ENCODE measurements at regions of chr13 and their contacts with region 1.

Region 1: DNA sequence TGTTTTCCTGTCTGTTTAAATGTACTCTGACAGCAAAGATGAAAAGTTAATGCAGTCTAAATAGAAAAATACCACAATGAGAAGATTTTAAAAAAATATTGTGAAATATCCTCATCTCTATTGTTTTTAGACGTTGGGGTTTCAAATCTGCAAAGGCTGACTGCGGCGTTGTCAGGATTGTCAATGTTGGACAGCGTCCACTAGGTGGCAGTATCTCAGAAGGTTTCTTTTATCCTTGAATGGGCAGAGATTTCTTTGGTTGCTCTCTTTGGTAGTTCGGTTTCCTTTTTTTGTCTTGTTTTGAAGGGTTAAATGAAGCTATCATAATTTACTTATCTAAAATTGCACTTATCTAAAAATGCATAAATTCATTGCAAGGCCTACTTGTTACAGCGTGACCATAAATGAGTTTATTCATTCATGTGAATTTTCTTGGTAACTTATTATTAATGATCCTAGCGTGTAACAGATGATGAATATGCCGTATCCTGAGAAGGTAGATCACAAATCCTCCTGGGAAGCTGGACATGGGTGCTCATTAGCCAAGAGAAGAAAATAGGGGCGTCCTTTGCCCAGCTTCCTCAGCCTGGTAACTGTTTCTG is 21.1 kb downstream of the TNFSF11 start:
- DNase-seq: peak in 8 of 9 experiments; percentile 22 to 62 (median 46)
- ATAC-seq: no peak
- H3K4me3 ChIP-seq: no peak overlapping the region
- H3K4me3 Mint-ChIP-seq: no peak overlapping the region
- H3K27ac ChIP-seq: no peak overlapping the region
- H3K27ac Mint-ChIP-seq: no peak overlapping the region
- H3K4me1 ChIP-seq: no peaks in the 10 kb centered on the region
- H3K4me1 Mint-ChIP-seq: no peaks in the 10 kb centered on the region
- H3K27me3 ChIP-seq: no peaks in the 10 kb centered on the region
- H3K27me3 Mint-ChIP-seq: peaks cover 10% of the 10 kb centered on the region
- CTCF ChIP-seq: peak; percentile 95

Region 2: GRCh38 chr13:42333613-42334328 is 261.3 kb before region 1 on chr13:
- CTCF ChIA-PET with region 1: interaction called, 6 read pairs
- POLR2A ChIA-PET with region 1: no interaction called
- intact Hi-C with region 1: loop called in 1 of 2 experiments (anchors 2 kb)
- DNase-seq: peak in 2 of 9 experiments; percentile 30 to 41
- ATAC-seq: no peak
- H3K4me3 ChIP-seq: no peak overlapping the region
- H3K4me3 Mint-ChIP-seq: no peak overlapping the region
- H3K27ac ChIP-seq: no peak overlapping the region
- H3K27ac Mint-ChIP-seq: peak overlapping the region; percentile 30
- H3K4me1 ChIP-seq: peaks cover 8% of the 10 kb centered on the region
- H3K4me1 Mint-ChIP-seq: peaks cover 29% of the 10 kb centered on the region
- H3K27me3 ChIP-seq: no peaks in the 10 kb centered on the region
- H3K27me3 Mint-ChIP-seq: no peaks in the 10 kb centered on the region
- CTCF ChIP-seq: peak; percentile 32

Region 3: GRCh38 chr13:42377640-42378382 is 217.3 kb before region 1 on chr13:
- CTCF ChIA-PET with region 1: no interaction called
- POLR2A ChIA-PET with region 1: no interaction called
- intact Hi-C with region 1: no loop called
- DNase-seq: peak in 2 of 9 experiments; percentile 73 to 85
- ATAC-seq: peak; percentile 68
- H3K4me3 ChIP-seq: no peak overlapping the region
- H3K4me3 Mint-ChIP-seq: no peak overlapping the region
- H3K27ac ChIP-seq: peak overlapping the region in 1 of 2 experiments; percentile 51
- H3K27ac Mint-ChIP-seq: peak overlapping the region; percentile 6
- H3K4me1 ChIP-seq: no peaks in the 10 kb centered on the region
- H3K4me1 Mint-ChIP-seq: peaks cover 28% of the 10 kb centered on the region
- H3K27me3 ChIP-seq: no peaks in the 10 kb centered on the region
- H3K27me3 Mint-ChIP-seq: no peaks in the 10 kb centered on the region
- CTCF ChIP-seq: no peak

Region 4: GRCh38 chr13:42581427-42581826 is 13.6 kb before region 1 on chr13:
- CTCF ChIA-PET with region 1: interaction called, 10 read pairs
- POLR2A ChIA-PET with region 1: no interaction called
- intact Hi-C with region 1: no loop called
- DNase-seq: no peak
- ATAC-seq: no peak
- H3K4me3 ChIP-seq: no peak overlapping the region
- H3K4me3 Mint-ChIP-seq: no peak overlapping the region
- H3K27ac ChIP-seq: no peak overlapping the region
- H3K27ac Mint-ChIP-seq: no peak overlapping the region
- H3K4me1 ChIP-seq: no peaks in the 10 kb centered on the region
- H3K4me1 Mint-ChIP-seq: no peaks in the 10 kb centered on the region
- H3K27me3 ChIP-seq: peaks cover 0 to 4% of the 10 kb centered on the region in 2 experiments
- H3K27me3 Mint-ChIP-seq: peaks cover 30% of the 10 kb centered on the region
- CTCF ChIP-seq: no peak

Region 5: DNA sequence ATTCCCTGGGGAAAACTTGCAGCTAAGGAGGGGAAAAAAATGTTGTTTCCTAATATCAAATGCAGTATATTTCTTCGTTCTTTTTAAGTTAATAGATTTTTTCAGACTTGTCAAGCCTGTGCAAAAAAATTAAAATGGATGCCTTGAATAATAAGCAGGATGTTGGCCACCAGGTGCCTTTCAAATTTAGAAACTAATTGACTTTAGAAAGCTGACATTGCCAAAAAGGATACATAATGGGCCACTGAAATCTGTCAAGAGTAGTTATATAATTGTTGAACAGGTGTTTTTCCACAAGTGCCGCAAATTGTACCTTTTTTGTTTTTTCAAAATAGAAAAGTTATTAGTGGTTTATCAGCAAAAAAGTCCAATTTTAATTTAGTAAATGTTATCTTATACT is 12.5 kb after region 1 on chr13:
- CTCF ChIA-PET with region 1: interaction called, 21 read pairs
- POLR2A ChIA-PET with region 1: no interaction called
- intact Hi-C with region 1: no loop called
- DNase-seq: no peak
- ATAC-seq: no peak
- H3K4me3 ChIP-seq: no peak overlapping the region
- H3K4me3 Mint-ChIP-seq: no peak overlapping the region
- H3K27ac ChIP-seq: no peak overlapping the region
- H3K27ac Mint-ChIP-seq: no peak overlapping the region
- H3K4me1 ChIP-seq: no peaks in the 10 kb centered on the region
- H3K4me1 Mint-ChIP-seq: no peaks in the 10 kb centered on the region
- H3K27me3 ChIP-seq: no peaks in the 10 kb centered on the region
- H3K27me3 Mint-ChIP-seq: peaks cover 8% of the 10 kb centered on the region
- CTCF ChIP-seq: no peak

Region 6: GRCh38 chr13:43804461-43805070 is 1209.5 kb after region 1 on chr13:
- CTCF ChIA-PET with region 1: interaction called, 6 read pairs
- POLR2A ChIA-PET with region 1: no interaction called
- intact Hi-C with region 1: loop called in 1 of 2 experiments (anchors 1 kb)
- DNase-seq: peak in 3 of 9 experiments; percentile 22 to 60 (median 55)
- ATAC-seq: no peak
- H3K4me3 ChIP-seq: no peak overlapping the region
- H3K4me3 Mint-ChIP-seq: no peak overlapping the region
- H3K27ac ChIP-seq: no peak overlapping the region
- H3K27ac Mint-ChIP-seq: no peak overlapping the region
- H3K4me1 ChIP-seq: no peaks in the 10 kb centered on the region
- H3K4me1 Mint-ChIP-seq: peaks cover 2% of the 10 kb centered on the region
- H3K27me3 ChIP-seq: no peaks in the 10 kb centered on the region
- H3K27me3 Mint-ChIP-seq: peaks cover 5% of the 10 kb centered on the region
- CTCF ChIP-seq: peak; percentile 69

Region 7: DNA sequence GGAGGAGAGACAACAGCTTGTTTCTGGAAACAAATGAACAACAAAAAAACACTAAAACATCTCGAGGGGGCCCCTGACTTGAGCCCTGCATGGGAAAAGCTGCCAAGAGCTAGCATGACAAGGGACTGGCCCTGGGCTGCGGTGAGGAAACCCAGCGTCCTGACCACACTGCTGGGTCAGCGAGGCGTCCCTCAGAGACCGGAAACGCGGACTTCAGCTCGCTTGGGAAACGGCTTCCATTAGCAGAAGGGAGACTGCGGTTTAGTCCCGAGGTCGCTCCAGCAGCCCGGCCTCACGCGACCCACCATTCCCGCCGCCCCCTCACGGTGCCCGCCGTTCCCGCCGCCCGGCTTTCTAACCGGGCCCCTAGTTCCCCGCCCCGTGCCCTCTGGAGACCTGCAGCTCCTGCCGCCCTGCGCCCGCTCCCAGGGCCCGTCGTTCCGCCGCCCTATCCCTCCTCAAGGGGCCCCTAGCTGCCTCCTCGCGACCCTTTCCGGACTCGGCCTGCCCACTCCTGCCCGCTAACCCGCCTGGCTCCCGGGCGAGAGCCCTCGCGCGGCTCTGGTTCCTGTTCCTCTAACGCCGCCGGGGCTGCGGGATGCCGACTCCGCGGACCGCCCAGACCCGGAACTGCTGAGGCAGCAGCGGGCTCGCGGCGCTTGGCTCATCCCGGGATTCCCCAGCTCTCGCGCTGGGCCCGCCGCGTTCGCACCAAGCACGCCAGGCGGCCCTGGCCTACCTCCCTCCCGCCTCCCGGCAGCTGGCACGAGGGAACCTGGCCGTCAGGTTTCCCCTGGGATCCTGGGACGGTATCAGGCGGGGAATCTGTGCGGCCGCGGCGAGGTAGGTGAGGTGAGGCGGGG is 1284.1 kb after region 1 on chr13 and contains the start of gene CCDC122:
- CTCF ChIA-PET with region 1: no interaction called
- POLR2A ChIA-PET with region 1: no interaction called
- intact Hi-C with region 1: loop called (anchors 2 kb)
- DNase-seq: peak; percentile 37 to 89 (median 69)
- ATAC-seq: peak; percentile 78
- H3K4me3 ChIP-seq: peak within 1 kb of the TSS; percentile 56 to 66
- H3K4me3 Mint-ChIP-seq: peak within 1 kb of the TSS; percentile 90
- H3K27ac ChIP-seq: peak within 1 kb of the TSS in 1 of 2 experiments; percentile 61
- H3K27ac Mint-ChIP-seq: peak within 1 kb of the TSS; percentile 84
- H3K4me1 ChIP-seq: peaks cover 10% of the 10 kb centered on the region
- H3K4me1 Mint-ChIP-seq: peaks cover 14% of the 10 kb centered on the region
- H3K27me3 ChIP-seq: no peaks in the 10 kb centered on the region
- H3K27me3 Mint-ChIP-seq: peaks cover 11% of the 10 kb centered on the region
- CTCF ChIP-seq: no peak
- total RNA-seq, gene CCDC122: not detected

Region 8: DNA sequence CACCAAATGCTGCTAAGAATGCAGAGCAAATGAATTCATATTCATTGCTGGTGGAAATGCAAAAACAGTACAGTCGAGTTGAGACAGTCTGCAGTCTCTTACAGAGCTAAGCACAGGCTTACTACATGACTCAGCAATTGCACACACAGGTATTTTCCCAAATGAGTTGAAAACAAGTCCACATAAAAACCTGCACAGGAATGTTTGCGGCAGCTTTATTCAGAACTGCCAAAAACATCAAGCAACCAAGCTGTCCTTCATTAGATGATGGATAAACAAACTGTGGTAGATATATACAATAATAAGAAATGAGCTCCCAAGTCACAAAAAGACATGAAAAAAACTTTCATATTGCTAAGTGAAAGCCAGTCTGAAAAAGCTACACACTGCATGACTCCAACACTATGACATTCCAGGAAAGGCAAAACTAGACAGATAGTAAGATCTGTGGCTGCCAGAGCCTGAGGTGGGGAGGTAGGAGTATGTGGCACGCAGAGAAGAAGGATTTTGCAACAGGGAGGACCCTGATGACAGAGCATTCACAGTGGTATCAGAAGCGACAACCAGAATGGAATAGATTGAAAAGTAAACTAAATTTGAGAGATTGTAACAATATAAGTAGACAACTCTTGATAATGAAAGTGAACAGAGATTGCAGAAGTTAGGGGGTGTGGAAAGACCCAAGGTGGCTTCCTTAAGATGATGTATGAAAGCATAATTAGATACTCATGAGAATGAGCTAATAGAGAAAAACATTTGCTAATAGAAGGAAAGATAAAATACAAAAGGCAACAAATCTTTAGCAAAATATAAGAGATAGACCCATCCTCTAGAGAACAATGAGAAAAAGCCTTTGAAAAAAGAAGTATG is 1928.3 kb after region 1 on chr13:
- CTCF ChIA-PET with region 1: no interaction called
- POLR2A ChIA-PET with region 1: no interaction called
- intact Hi-C with region 1: no loop called
- DNase-seq: no peak
- ATAC-seq: no peak
- H3K4me3 ChIP-seq: no peak overlapping the region
- H3K4me3 Mint-ChIP-seq: no peak overlapping the region
- H3K27ac ChIP-seq: no peak overlapping the region
- H3K27ac Mint-ChIP-seq: no peak overlapping the region
- H3K4me1 ChIP-seq: no peaks in the 10 kb centered on the region
- H3K4me1 Mint-ChIP-seq: no peaks in the 10 kb centered on the region
- H3K27me3 ChIP-seq: no peaks in the 10 kb centered on the region
- H3K27me3 Mint-ChIP-seq: no peaks in the 10 kb centered on the region
- CTCF ChIP-seq: no peak